GM23248 (cell line): ENCODE measurements at regions of chr2 and their contacts with region 1.

Region 1: GRCh38 chr2:234550511-234551107 is 53.7 kb upstream of the ARL4C start:
- DNase-seq: peak; percentile 86
- H3K4me3 ChIP-seq: peak overlapping the region; percentile 3; the same call in 1 of the 2 replicates
- H3K27ac ChIP-seq: no peak overlapping the region
- H3K4me1 ChIP-seq: peaks cover 8% of the 10 kb centered on the region
- H3K27me3 ChIP-seq: no peaks in the 10 kb centered on the region

Region 2: GRCh38 chr2:234951664-234952269 is 401.2 kb after region 1 on chr2 and contains the start of gene SH3BP4:
- in situ Hi-C with region 1: loop called (anchors 25 kb)
- DNase-seq: peak; percentile 92
- H3K4me3 ChIP-seq: peak within 1 kb of the TSS; percentile 93
- H3K27ac ChIP-seq: peak within 1 kb of the TSS; percentile 96
- H3K4me1 ChIP-seq: peaks cover 47% of the 10 kb centered on the region
- H3K27me3 ChIP-seq: no peaks in the 10 kb centered on the region
- total RNA-seq, gene SH3BP4: 96.0 and 100 TPM in 2 replicates

Region 3: DNA sequence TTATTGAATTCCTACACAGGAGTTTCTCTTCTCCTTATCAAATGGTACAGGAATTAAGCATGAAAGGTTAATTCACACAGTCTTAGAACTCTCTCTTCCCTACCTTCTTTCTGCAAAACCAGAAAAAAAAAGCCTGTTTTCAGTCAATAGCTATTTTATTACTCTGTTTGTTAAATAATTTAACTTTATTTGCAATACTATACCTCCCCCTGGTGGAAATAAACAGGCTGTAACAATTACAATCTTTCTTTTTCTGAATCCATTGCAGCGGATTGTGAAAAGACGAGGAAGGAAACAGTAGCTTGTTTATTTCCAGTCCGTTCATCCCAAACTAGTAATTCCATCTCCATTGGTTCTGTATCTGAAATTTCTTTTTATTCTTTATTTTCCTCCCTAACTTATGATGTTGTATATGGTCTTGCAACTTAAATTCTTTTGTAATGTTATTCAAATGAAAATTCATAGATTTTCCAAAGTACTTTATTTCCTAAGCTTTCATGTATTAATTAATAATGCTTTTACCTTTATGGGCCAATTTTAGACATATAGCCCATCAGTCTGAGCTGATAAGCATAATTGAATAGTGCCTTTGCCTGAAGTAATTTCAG is 566.4 kb after region 1 on chr2:
- in situ Hi-C with region 1: loop called (anchors 5 kb)
- DNase-seq: peak; percentile 70
- H3K4me3 ChIP-seq: no peak overlapping the region
- H3K27ac ChIP-seq: no peak overlapping the region
- H3K4me1 ChIP-seq: no peaks in the 10 kb centered on the region
- H3K27me3 ChIP-seq: no peaks in the 10 kb centered on the region

Region 4: GRCh38 chr2:235191978-235192377 is 641.4 kb after region 1 on chr2:
- in situ Hi-C with region 1: no loop called
- DNase-seq: peak; percentile 69
- H3K4me3 ChIP-seq: peak overlapping the region; percentile 70
- H3K27ac ChIP-seq: no peak overlapping the region
- H3K4me1 ChIP-seq: no peaks in the 10 kb centered on the region
- H3K27me3 ChIP-seq: no peaks in the 10 kb centered on the region